ENCODE measurements at regions of chr1 and their contacts with region 1.

Region 1: DNA sequence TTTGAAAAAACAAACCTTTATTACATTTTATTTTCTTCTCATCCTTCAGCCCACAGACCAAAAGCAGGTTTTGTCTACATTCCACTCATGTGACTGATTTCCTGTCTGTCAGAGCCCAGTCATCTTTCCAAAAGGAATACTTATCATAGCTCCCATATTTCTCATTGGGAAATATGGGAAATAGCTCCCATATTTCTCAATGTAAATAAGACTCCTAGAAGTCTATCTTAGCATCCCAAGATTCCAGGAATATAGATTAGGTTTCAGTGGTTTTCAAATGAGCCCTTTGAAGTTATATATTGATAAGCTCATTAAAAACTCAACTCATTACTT is 19.1 kb upstream of the NRDC start:
- DNase-seq: no peak
- ATAC-seq: no peak
- H3K4me3 Mint-ChIP-seq: no peak overlapping the region
- H3K27ac Mint-ChIP-seq: no peak overlapping the region
- H3K4me1 Mint-ChIP-seq: peaks cover 4% of the 10 kb centered on the region
- H3K27me3 Mint-ChIP-seq: peaks cover 4% of the 10 kb centered on the region
- CTCF ChIP-seq: no peak

Region 2: GRCh38 chr1:51840743-51841461 is 56.8 kb before region 1 on chr1:
- CTCF ChIA-PET with region 1: no interaction called
- POLR2A ChIA-PET with region 1: no interaction called
- DNase-seq: no peak
- ATAC-seq: no peak
- H3K4me3 Mint-ChIP-seq: no peak overlapping the region
- H3K27ac Mint-ChIP-seq: no peak overlapping the region
- H3K4me1 Mint-ChIP-seq: peaks cover 24% of the 10 kb centered on the region
- H3K27me3 Mint-ChIP-seq: no peaks in the 10 kb centered on the region
- CTCF ChIP-seq: no peak

Region 3: DNA sequence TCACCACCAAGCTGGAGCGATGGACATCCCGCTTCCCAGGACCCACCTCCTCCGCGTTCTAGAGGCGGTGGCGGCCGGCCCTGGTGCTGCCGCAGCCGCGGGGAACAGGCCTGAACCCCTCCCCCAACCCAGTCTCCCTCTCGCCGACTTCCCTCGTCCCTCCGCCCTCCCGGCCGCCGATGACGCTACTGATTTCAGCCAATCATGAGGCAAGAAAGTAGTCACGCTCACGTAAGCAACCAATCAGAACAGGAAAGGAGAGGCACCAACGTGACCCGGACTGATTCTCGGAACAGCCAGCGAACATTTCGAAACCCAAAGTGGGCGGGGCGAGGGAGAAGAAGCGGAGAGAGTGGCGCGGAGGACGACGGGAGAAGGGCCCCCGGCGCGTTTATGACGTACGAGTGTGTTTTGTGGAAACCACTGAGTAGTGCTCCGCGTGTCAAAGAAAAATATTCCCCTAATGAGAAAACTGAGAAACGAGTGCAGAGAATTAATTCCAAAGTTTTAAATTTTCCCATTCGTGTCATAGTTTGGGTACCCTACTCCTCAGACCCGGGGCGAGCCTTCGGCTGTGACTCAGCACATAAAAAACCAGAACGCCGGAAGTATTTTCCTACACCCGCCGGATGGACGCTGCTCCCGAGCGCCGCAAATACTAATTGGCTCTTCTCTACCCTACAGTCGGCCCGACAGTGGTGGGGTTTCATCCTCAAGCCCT is 18.9 kb before region 1 on chr1 and contains the start of gene NRDC:
- CTCF ChIA-PET with region 1: interaction called, 11 read pairs
- POLR2A ChIA-PET with region 1: no interaction called
- DNase-seq: peak; percentile 99
- ATAC-seq: peak; percentile 93
- H3K4me3 Mint-ChIP-seq: no peak within 1 kb of the TSS
- H3K27ac Mint-ChIP-seq: no peak within 1 kb of the TSS
- H3K4me1 Mint-ChIP-seq: peaks cover 17% of the 10 kb centered on the region
- H3K27me3 Mint-ChIP-seq: peaks cover 17% of the 10 kb centered on the region
- CTCF ChIP-seq: no peak
- total RNA-seq, gene NRDC: 172 to 201 TPM (median 179 TPM) in 3 replicates

Region 4: GRCh38 chr1:51926171-51926812 is 28.6 kb after region 1 on chr1:
- CTCF ChIA-PET with region 1: interaction called, 26 read pairs
- POLR2A ChIA-PET with region 1: no interaction called
- DNase-seq: no peak
- ATAC-seq: peak; percentile 88
- H3K4me3 Mint-ChIP-seq: no peak overlapping the region
- H3K27ac Mint-ChIP-seq: peak overlapping the region; percentile 72
- H3K4me1 Mint-ChIP-seq: peaks cover 9% of the 10 kb centered on the region
- H3K27me3 Mint-ChIP-seq: no peaks in the 10 kb centered on the region
- CTCF ChIP-seq: no peak

Region 5: DNA sequence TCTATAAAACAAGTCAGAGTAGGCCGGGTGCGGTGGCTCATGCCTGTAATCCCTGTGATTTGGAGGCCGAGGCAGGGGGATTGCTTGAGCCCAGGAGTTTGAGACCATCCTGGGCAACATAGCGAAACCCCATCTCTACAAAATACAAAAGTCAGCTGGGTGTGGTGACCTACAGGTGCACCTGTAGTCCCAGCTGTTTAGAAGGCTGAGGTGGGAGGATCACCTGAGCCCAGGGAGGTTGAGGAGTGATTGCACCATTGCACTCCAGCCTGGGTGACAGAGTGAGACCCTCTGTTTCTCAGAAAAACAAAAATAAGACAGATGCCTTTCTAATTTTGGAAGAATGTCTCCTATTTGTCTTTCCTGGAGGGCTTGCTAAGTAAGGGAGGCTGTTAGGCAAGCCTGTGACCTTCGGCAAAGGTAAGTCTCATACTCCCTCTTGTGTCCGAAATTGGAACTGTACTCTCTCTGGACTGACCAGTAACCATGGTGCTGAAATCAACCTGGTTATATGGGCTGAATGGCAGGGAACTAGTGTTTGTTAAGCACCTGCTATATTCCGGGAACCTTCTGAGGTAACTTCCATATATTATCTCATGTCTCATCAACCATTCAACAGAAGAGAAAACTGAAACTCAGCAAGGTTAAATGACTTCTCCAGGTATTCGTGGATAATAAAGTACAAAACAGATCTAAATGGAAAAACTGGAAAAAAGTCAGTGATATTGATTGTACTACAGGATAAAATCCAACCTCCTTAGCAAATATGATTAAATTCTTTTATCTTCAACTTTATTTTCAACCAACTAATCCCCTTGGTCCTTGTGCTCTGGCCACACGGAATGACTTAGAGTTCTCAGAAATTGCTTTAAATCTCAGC is 104.6 kb after region 1 on chr1:
- CTCF ChIA-PET with region 1: interaction called, 17 read pairs
- POLR2A ChIA-PET with region 1: no interaction called
- DNase-seq: peak; percentile 45
- ATAC-seq: peak; percentile 77
- H3K4me3 Mint-ChIP-seq: no peak overlapping the region
- H3K27ac Mint-ChIP-seq: no peak overlapping the region
- H3K4me1 Mint-ChIP-seq: peaks cover 28% of the 10 kb centered on the region
- H3K27me3 Mint-ChIP-seq: no peaks in the 10 kb centered on the region; the same call in 1 of the 2 replicates
- CTCF ChIP-seq: peak; percentile 89